B cell (primary cell): ENCODE measurements at regions of chr12 and their contacts with region 1.

Region 1: DNA sequence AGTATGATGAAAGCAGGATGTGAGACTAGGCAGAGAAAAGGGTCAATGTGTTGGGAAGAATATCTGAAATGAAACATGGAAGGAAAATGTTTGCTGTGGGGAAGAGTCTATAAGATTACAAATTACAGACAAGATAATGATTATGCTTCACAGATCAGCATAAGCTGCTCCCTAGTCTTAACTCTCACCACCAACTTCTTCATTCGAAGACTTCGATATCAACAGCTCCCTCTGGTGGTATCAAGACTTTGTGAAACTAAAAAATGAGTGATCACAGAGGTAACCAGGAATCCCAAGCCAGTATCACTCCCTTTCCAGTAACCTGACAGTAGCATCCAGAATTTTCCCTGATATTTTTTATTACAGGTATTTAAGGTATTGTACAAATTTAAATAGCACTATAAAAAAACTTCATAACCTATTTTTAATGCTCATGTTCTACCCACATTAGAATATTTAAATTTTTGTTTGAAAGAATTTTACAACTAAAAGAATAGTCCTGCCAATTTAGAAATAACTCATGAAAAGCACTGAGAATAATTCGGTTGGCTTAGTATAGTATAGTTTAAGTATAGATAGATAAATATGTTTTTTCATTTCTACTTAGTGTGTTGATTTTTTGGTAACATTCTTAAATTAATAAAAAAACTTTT is 84.4 kb downstream of the C2CD5 start:
- DNase-seq: peak; percentile 57
- ATAC-seq: peak; percentile 49
- H3K4me3 ChIP-seq: no peak overlapping the region
- H3K4me3 Mint-ChIP-seq: no peak overlapping the region
- H3K27ac ChIP-seq: no peak overlapping the region
- H3K27ac Mint-ChIP-seq: no peak overlapping the region
- H3K4me1 ChIP-seq: peaks cover 0 to 3% of the 10 kb centered on the region in 2 donors
- H3K4me1 Mint-ChIP-seq: peaks cover 11% of the 10 kb centered on the region
- H3K27me3 ChIP-seq: no peaks in the 10 kb centered on the region
- H3K27me3 Mint-ChIP-seq: no peaks in the 10 kb centered on the region
- CTCF ChIP-seq: peak; percentile 83

Region 2: DNA sequence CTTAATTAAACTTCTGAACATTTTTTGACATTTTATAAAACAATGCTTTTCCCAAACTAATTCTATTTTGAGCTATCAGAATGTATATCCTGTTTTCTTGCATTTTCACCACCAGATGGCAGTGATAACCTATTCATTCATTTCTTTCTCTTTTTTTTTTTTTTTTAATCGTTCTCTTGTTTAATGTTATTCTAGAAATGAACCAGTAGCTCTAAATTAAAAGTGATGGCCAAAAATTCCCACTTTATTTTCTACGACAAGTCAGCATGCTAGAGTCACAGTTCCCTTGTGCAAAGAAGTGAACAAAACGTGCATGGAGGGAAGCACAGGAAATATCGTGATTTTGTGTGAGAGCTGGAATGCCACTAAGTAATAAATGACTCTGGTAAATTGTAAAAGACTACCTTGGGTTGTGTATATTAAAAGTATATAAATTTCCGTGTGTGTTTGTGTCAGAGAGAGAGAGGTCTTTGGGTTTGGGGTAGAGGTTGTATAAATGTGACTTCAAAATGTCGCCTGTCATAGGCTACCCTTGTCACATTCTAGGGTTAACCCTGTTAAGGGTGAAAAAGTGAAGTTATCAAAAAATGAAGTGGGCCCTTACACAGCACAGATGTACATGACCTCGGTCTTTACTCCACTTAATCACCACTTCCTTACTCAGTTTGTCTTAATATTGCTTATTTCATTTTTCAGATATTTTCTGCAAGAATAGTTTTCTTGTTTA is 761.9 kb before region 1 on chr12:
- CTCF ChIA-PET with region 1: interaction called, 5 read pairs
- POLR2A ChIA-PET with region 1: no interaction called
- intact Hi-C with region 1: loop called (anchors 5 kb)
- DNase-seq: peak; percentile 37
- ATAC-seq: no peak
- H3K4me3 ChIP-seq: no peak overlapping the region
- H3K4me3 Mint-ChIP-seq: no peak overlapping the region
- H3K27ac ChIP-seq: no peak overlapping the region
- H3K27ac Mint-ChIP-seq: no peak overlapping the region
- H3K4me1 ChIP-seq: no peaks in the 10 kb centered on the region
- H3K4me1 Mint-ChIP-seq: no peaks in the 10 kb centered on the region
- H3K27me3 ChIP-seq: no peaks in the 10 kb centered on the region
- H3K27me3 Mint-ChIP-seq: peaks cover 3% of the 10 kb centered on the region
- CTCF ChIP-seq: peak; percentile 77

Region 3: DNA sequence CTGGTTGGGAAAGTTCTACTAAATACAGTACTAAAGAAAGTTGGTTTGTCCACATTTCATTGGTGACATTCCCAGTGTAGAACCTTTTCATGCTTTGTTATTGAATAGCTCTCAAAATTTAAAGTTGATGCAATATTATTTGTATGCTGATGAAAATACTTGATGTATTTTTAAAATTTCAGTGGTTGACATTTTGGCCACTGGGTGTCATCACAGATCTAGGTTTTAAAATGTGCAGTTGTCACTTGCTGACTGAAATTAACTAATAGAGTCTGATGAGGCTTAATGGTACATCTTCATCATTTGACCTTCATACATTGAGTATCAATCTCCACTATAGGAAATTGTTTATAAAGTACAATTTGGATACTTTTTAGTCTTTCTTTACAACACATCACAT is 376.8 kb before region 1 on chr12:
- CTCF ChIA-PET with region 1: interaction called, 14 read pairs
- POLR2A ChIA-PET with region 1: no interaction called
- intact Hi-C with region 1: loop called (anchors 1 kb)
- DNase-seq: peak; percentile 56
- ATAC-seq: no peak
- H3K4me3 ChIP-seq: no peak overlapping the region
- H3K4me3 Mint-ChIP-seq: no peak overlapping the region
- H3K27ac ChIP-seq: no peak overlapping the region
- H3K27ac Mint-ChIP-seq: no peak overlapping the region
- H3K4me1 ChIP-seq: no peaks in the 10 kb centered on the region
- H3K4me1 Mint-ChIP-seq: no peaks in the 10 kb centered on the region
- H3K27me3 ChIP-seq: no peaks in the 10 kb centered on the region
- H3K27me3 Mint-ChIP-seq: peaks cover 2% of the 10 kb centered on the region
- CTCF ChIP-seq: peak; percentile 70

Region 4: GRCh38 chr12:22473212-22473611 is 13.2 kb after region 1 on chr12:
- CTCF ChIA-PET with region 1: interaction called, 32 read pairs
- POLR2A ChIA-PET with region 1: no interaction called
- intact Hi-C with region 1: no loop called
- DNase-seq: peak; percentile 35
- ATAC-seq: peak; percentile 60
- H3K4me3 ChIP-seq: no peak overlapping the region
- H3K4me3 Mint-ChIP-seq: peak overlapping the region; percentile 26
- H3K27ac ChIP-seq: no peak overlapping the region
- H3K27ac Mint-ChIP-seq: peak overlapping the region; percentile 27
- H3K4me1 ChIP-seq: peaks cover 5 to 6% of the 10 kb centered on the region in 2 donors
- H3K4me1 Mint-ChIP-seq: peaks cover 9% of the 10 kb centered on the region
- H3K27me3 ChIP-seq: no peaks in the 10 kb centered on the region
- H3K27me3 Mint-ChIP-seq: no peaks in the 10 kb centered on the region
- CTCF ChIP-seq: no peak